Testis (tissue), 5 donors: ENCODE measurements at regions of chr22 and their contacts with region 1.

Region 1: GRCh38 chr22:28855355-28856094 is 27.8 kb upstream of the ZNRF3 start:
- DNase-seq: peak; percentile 62
- H3K4me3 ChIP-seq: no peak overlapping the region
- H3K27ac ChIP-seq: no peak overlapping the region
- H3K4me1 ChIP-seq: no peaks in the 10 kb centered on the region
- H3K27me3 ChIP-seq: no peaks in the 10 kb centered on the region
- CTCF ChIP-seq: peak; percentile 93 to 97 (median 95)
- POLR2A ChIP-seq: no peak

Region 2: DNA sequence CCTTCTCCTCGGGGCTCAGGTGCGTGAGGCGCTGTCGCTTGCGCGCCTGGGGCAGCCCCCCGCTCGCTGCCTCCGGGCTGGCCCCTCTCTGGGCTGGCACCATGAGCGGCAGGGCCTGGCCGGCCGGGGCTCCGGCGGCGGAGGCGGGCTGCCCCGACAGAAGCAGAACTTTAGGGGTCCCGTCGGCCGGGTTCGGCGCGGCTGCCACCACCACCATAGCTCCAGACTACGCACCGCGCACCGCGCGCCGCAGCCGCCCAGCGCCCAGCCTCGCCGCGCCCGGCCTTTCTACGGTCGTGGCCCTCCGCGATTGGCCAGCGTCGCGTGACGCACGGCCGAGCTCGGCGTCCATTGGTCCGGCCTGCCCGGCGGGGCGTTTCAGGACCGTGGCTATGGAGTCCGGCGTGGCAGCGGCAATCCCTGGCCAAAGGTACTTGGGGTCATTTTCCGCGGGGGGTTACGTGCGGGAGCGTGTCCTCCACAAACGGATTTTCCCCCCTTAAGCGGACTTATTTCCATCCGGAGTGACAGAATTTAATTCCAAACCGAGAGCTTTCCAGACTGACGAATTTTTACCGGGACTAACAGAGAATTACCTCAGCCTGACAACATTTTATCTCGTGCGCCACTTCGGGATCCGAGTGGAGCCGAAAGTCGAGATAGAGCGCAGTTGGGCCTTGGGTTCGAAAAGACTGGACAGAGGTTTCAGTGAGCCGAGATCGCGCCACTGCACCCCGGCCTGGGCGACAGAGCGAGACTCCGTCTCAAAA is 55.0 kb before region 1 on chr22 and contains the start of gene XBP1:
- intact Hi-C with region 1: no loop called
- DNase-seq: peak; percentile 96
- H3K4me3 ChIP-seq: peak within 1 kb of the TSS; percentile 82 to 100
- H3K27ac ChIP-seq: peak within 1 kb of the TSS; percentile 93 to 99
- H3K4me1 ChIP-seq: peaks cover 10% of the 10 kb centered on the region
- H3K27me3 ChIP-seq: no peaks in the 10 kb centered on the region
- CTCF ChIP-seq: no peak
- POLR2A ChIP-seq: peak; percentile 99
- total RNA-seq, gene XBP1: 48.2 to 63.3 TPM

Region 3: DNA sequence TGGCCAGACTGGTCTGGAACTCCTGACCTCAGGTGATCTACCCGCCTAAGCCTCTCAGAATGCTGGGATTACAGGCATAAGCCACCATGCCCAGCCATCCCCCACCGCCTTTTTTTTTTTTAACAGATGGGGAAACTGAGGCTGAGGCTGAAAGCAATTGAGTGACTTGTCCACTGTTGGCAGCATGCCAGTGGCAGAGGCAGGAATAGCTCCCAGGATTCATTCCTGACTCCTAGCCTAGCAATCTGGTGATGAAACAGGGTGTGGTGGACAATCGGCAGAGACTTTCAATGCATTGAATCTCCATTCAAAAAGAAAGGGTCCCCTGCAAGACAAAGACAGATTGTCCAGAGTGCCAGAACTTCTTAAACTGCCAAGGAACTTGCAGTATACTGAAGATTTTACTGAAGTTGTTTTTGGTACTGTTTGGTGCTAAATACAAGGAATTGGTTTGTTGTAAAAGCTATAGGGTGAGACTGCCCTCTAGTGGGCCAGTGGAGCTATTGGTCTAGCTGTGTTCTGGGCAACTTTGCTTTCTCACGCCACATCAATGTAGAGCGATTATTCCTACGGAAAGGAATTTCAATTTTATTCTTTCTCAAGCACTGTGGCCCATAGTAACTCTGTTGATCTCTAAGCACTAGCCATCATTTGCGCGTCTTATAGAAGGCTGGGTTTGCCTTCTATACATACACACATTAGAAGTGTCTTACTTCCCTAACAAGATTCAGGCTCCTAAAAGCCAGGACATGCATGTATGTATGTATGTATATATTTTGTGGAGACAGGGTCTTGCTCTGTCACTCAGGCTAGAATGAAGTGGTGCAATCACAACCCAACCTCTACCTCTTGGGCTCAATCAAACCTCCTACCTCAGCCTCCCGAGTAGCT is 185.1 kb after region 1 on chr22:
- intact Hi-C with region 1: loop called (anchors 10 kb)
- DNase-seq: peak; percentile 83
- H3K4me3 ChIP-seq: no peak overlapping the region
- H3K27ac ChIP-seq: no peak overlapping the region
- H3K4me1 ChIP-seq: no peaks in the 10 kb centered on the region
- H3K27me3 ChIP-seq: no peaks in the 10 kb centered on the region
- CTCF ChIP-seq: peak; percentile 84 to 97 (median 94)
- POLR2A ChIP-seq: no peak